ENCODE measurements at regions of chr6 and their contacts with region 1.

Region 1: GRCh38 chr6:132614554-132614953 is 9.5 kb downstream of the TAAR2 start:
- DNase-seq: no peak
- ATAC-seq: no peak
- H3K4me3 ChIP-seq: no peak overlapping the region
- H3K27ac ChIP-seq: no peak overlapping the region
- H3K4me1 ChIP-seq: no peaks in the 10 kb centered on the region
- H3K27me3 ChIP-seq: peaks cover 23% of the 10 kb centered on the region
- CTCF ChIP-seq: no peak
- POLR2A ChIP-seq: no peak
- RAD21 ChIP-seq: no peak

Region 2: DNA sequence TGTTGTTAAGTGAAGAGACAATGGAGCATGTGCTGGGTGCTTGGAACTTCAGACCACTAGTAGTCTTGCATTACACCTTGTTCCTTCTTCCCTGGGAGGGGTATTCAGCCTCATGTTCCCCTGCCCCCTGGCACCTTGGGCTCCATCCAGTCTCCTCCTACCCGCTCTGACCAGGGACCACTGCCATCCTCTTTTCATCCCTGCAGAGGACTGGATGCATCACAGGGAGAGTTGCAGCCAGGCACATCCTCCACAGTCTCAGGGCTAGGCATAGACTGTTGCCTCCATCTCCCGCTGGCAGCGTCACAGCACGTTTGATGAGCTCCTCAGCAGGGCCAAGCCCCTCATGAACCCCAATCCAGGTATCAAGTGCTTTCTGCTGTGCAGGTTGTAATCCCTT is 63.3 kb before region 1 on chr6:
- CTCF ChIA-PET with region 1: no interaction called
- POLR2A ChIA-PET with region 1: no interaction called
- dilution Hi-C with region 1: no loop called
- in situ Hi-C with region 1: no loop called
- intact Hi-C with region 1: no loop called
- DNase-seq: no peak
- ATAC-seq: no peak
- H3K4me3 ChIP-seq: no peak overlapping the region
- H3K27ac ChIP-seq: no peak overlapping the region
- H3K4me1 ChIP-seq: no peaks in the 10 kb centered on the region
- H3K27me3 ChIP-seq: peaks cover 45% of the 10 kb centered on the region
- CTCF ChIP-seq: no peak
- POLR2A ChIP-seq: no peak
- RAD21 ChIP-seq: no peak

Region 3: GRCh38 chr6:132651062-132651461 is 36.5 kb after region 1 on chr6:
- CTCF ChIA-PET with region 1: no interaction called
- POLR2A ChIA-PET with region 1: no interaction called
- dilution Hi-C with region 1: no loop called
- in situ Hi-C with region 1: no loop called
- intact Hi-C with region 1: loop called (anchors 5 kb)
- DNase-seq: no peak
- ATAC-seq: no peak
- H3K4me3 ChIP-seq: no peak overlapping the region
- H3K27ac ChIP-seq: no peak overlapping the region
- H3K4me1 ChIP-seq: no peaks in the 10 kb centered on the region
- H3K27me3 ChIP-seq: peaks cover 31% of the 10 kb centered on the region
- CTCF ChIP-seq: no peak
- POLR2A ChIP-seq: no peak
- RAD21 ChIP-seq: no peak

Region 4: GRCh38 chr6:132931941-132932514 is 317.5 kb after region 1 on chr6:
- CTCF ChIA-PET with region 1: no interaction called
- POLR2A ChIA-PET with region 1: no interaction called
- dilution Hi-C with region 1: no loop called
- in situ Hi-C with region 1: no loop called
- intact Hi-C with region 1: no loop called
- DNase-seq: peak; percentile 76
- ATAC-seq: peak; percentile 67; the same call in 1 of the 2 replicates
- H3K4me3 ChIP-seq: no peak overlapping the region
- H3K27ac ChIP-seq: no peak overlapping the region
- H3K4me1 ChIP-seq: peaks cover 8% of the 10 kb centered on the region
- H3K27me3 ChIP-seq: no peaks in the 10 kb centered on the region
- CTCF ChIP-seq: no peak
- POLR2A ChIP-seq: no peak
- RAD21 ChIP-seq: no peak